Activated CD4-positive, alpha-beta T cell treated with anti-CD3 and anti-CD28 coated beads for 36 hours (primary cell): ENCODE measurements at regions of chr1 and their contacts with region 1.

Region 1: DNA sequence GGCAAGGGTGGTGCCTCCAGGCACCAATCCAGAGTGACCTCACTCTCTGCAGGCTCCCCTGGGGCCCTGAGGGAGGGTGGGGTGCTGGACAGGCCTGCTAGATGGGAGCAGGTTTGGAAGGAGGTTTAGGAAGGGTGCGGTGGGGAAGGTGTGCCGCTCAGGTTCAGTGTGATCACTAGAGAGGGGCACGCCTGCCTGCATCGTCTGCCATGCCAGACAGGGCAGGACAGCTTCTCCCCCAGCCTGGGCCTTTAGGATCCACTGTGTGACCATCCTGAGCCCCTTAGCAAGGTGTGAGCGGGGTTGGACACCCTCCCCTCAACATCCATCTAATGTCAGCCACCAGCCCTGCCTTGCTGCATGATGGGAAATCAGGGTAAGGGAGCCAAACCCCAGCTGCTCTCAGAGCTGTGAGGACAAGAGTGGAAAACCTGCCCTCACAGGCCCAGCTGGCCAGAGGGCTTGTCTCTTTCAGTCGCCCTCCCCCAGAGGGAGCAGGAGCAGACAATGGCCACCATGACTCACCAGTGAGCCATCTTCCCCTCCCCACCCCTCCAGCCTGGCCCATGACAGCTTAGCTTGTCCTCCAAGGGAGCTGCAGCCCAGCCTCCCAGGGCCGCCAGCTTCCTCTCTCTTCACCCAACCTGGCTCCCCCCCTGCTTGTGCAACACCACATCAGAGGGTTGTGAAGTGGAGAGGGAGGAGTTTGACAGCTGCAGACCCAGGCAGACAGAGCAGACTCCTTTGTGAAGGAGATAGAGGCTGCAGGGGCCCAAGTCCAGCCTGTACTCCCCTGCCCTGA is 37.0 kb downstream of the NUAK2 start:
- DNase-seq: peak; percentile 92
- ATAC-seq: peak; percentile 73
- H3K4me3 Mint-ChIP-seq: peak overlapping the region; percentile 55
- H3K27ac Mint-ChIP-seq: peak overlapping the region; percentile 92
- H3K4me1 Mint-ChIP-seq: peaks cover 82% of the 10 kb centered on the region
- H3K27me3 Mint-ChIP-seq: no peaks in the 10 kb centered on the region

Region 2: GRCh38 chr1:205211169-205211838 is 73.2 kb before region 1 on chr1 and contains the start of gene DSTYK:
- CTCF ChIA-PET with region 1: no interaction called
- POLR2A ChIA-PET with region 1: no interaction called
- intact Hi-C with region 1: loop called in 1 of 2 experiments (anchors 1 kb)
- DNase-seq: peak; percentile 97
- ATAC-seq: peak; percentile 90
- H3K4me3 Mint-ChIP-seq: peak within 1 kb of the TSS; percentile 97
- H3K27ac Mint-ChIP-seq: peak within 1 kb of the TSS; percentile 95
- H3K4me1 Mint-ChIP-seq: peaks cover 54% of the 10 kb centered on the region
- H3K27me3 Mint-ChIP-seq: no peaks in the 10 kb centered on the region
- total RNA-seq, gene DSTYK: 9.4 to 12.3 TPM

Region 3: GRCh38 chr1:205313563-205314308 is 29.2 kb after region 1 on chr1:
- CTCF ChIA-PET with region 1: interaction called, 760 read pairs
- POLR2A ChIA-PET with region 1: interaction called, 9 read pairs
- intact Hi-C with region 1: loop called (anchors 1 kb)
- DNase-seq: peak; percentile 59
- ATAC-seq: peak; percentile 80
- H3K4me3 Mint-ChIP-seq: peak overlapping the region; percentile 76
- H3K27ac Mint-ChIP-seq: peak overlapping the region; percentile 93
- H3K4me1 Mint-ChIP-seq: peaks cover 78% of the 10 kb centered on the region
- H3K27me3 Mint-ChIP-seq: no peaks in the 10 kb centered on the region

Region 4: DNA sequence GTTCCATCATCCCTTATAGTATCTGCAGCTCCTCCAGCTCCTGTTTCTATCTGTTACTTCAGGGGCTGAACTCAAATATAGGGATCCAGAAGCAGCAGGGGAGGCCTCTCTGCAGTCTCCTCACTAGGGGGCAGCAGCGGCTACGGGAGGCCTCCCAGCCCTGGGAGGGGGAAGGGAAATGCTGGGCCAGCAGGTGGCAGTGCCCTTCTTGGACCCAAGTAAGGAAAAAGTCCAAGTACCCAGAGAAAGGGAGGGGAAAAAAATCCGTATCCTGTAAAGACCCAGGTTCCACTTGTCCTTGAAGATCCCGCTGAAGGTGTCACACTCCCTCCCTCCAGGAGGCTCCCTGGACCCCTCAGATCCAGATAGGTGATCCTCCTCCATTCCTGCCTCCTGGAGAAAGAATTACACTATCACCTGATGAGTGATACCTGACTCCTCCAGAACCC is 51.1 kb after region 1 on chr1:
- CTCF ChIA-PET with region 1: interaction called, 760 read pairs
- POLR2A ChIA-PET with region 1: no interaction called
- intact Hi-C with region 1: no loop called
- DNase-seq: peak; percentile 92
- ATAC-seq: peak; percentile 96
- H3K4me3 Mint-ChIP-seq: no peak overlapping the region
- H3K27ac Mint-ChIP-seq: no peak overlapping the region
- H3K4me1 Mint-ChIP-seq: no peaks in the 10 kb centered on the region
- H3K27me3 Mint-ChIP-seq: no peaks in the 10 kb centered on the region

Region 5: GRCh38 chr1:205449750-205450443 is 165.4 kb after region 1 on chr1:
- CTCF ChIA-PET with region 1: no interaction called
- POLR2A ChIA-PET with region 1: no interaction called
- intact Hi-C with region 1: no loop called
- DNase-seq: peak; percentile 75
- ATAC-seq: peak; percentile 87
- H3K4me3 Mint-ChIP-seq: peak overlapping the region; percentile 55
- H3K27ac Mint-ChIP-seq: peak overlapping the region; percentile 58
- H3K4me1 Mint-ChIP-seq: peaks cover 5% of the 10 kb centered on the region
- H3K27me3 Mint-ChIP-seq: peaks cover 40% of the 10 kb centered on the region

Region 6: DNA sequence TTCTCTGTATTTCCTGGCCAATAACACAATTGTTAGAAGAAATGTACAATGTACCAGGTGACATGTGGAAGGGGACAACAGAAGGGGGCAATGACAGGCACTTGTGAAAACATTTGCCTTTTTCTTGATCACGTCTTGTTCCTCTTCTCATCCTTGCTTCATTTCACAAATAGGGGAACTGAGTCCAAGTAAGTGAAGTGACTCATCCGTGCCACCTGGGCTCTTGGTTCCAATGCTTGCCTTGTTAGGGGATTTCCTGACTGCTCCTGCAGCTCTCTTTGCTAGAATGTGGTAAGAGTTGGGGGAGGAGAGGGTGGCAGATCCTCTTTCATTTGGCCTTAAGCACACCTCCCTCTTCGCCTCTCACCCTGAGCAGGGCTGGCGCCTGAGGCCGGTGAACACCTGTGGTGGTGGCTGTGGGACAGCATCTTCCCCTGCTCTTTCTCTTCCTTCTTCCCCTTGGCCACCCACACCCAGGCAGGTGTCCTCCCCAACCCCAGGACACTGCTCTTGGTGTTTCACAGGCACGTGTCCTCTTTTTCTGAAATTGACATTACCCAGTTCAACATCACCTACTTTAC is 766.2 kb after region 1 on chr1:
- CTCF ChIA-PET with region 1: no interaction called
- POLR2A ChIA-PET with region 1: no interaction called
- intact Hi-C with region 1: loop called in 1 of 2 experiments (anchors 2 kb)
- DNase-seq: peak; percentile 82
- ATAC-seq: peak; percentile 91
- H3K4me3 Mint-ChIP-seq: peak overlapping the region; percentile 2
- H3K27ac Mint-ChIP-seq: peak overlapping the region; percentile 87
- H3K4me1 Mint-ChIP-seq: peaks cover 41% of the 10 kb centered on the region
- H3K27me3 Mint-ChIP-seq: peaks cover 5% of the 10 kb centered on the region

Region 7: GRCh38 chr1:206761159-206761768 is 1476.7 kb after region 1 on chr1:
- CTCF ChIA-PET with region 1: no interaction called
- POLR2A ChIA-PET with region 1: no interaction called
- intact Hi-C with region 1: no loop called
- DNase-seq: no peak
- ATAC-seq: no peak
- H3K4me3 Mint-ChIP-seq: no peak overlapping the region
- H3K27ac Mint-ChIP-seq: no peak overlapping the region
- H3K4me1 Mint-ChIP-seq: peaks cover 21% of the 10 kb centered on the region
- H3K27me3 Mint-ChIP-seq: peaks cover 3% of the 10 kb centered on the region